ENCODE measurements at regions of chr11 and their contacts with region 1.

Region 1: GRCh38 chr11:58254936-58255335 is 13.1 kb downstream of the OR10W1 start:
- DNase-seq: no peak
- H3K4me3 ChIP-seq: no peak overlapping the region
- H3K27ac ChIP-seq: no peak overlapping the region
- H3K4me1 ChIP-seq: no peaks in the 10 kb centered on the region
- H3K27me3 ChIP-seq: no peaks in the 10 kb centered on the region
- CTCF ChIP-seq: no peak
- EP300 ChIP-seq: no peak
- POLR2A ChIP-seq: no peak

Region 2: GRCh38 chr11:57896361-57897145 is 358.4 kb before region 1 on chr11:
- intact Hi-C with region 1: no loop called
- DNase-seq: no peak
- H3K4me3 ChIP-seq: no peak overlapping the region
- H3K27ac ChIP-seq: no peak overlapping the region
- H3K4me1 ChIP-seq: no peaks in the 10 kb centered on the region
- H3K27me3 ChIP-seq: no peaks in the 10 kb centered on the region
- CTCF ChIP-seq: no peak
- EP300 ChIP-seq: no peak
- POLR2A ChIP-seq: no peak

Region 3: GRCh38 chr11:58179648-58180047 is 75.3 kb before region 1 on chr11:
- intact Hi-C with region 1: loop called in 1 of 4 experiments (anchors 2 kb)
- DNase-seq: peak in 1 of 5 donors; percentile 15
- H3K4me3 ChIP-seq: no peak overlapping the region
- H3K27ac ChIP-seq: no peak overlapping the region
- H3K4me1 ChIP-seq: no peaks in the 10 kb centered on the region
- H3K27me3 ChIP-seq: no peaks in the 10 kb centered on the region
- CTCF ChIP-seq: no peak
- EP300 ChIP-seq: no peak
- POLR2A ChIP-seq: no peak

Region 4: DNA sequence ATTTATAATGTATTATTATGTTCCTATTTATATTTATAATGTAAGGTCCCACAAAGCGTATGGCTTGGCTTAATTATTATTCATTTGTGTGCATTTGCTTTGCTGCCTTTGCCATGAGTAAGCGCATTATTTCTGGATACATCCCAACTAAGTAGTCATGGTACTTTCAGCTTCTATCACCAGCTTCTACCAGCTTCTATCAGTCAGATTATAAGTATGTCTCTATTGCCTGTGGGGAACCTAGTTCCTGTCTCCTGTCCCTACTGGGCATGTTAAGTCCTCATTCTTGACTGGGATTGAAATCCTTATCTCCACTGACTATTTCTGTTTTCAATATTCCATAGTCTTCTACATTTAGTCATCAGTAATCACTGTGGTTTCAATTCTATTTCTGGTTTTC is 46.6 kb after region 1 on chr11:
- intact Hi-C with region 1: no loop called
- DNase-seq: no peak
- H3K4me3 ChIP-seq: no peak overlapping the region
- H3K27ac ChIP-seq: no peak overlapping the region
- H3K4me1 ChIP-seq: no peaks in the 10 kb centered on the region
- H3K27me3 ChIP-seq: no peaks in the 10 kb centered on the region
- CTCF ChIP-seq: no peak
- EP300 ChIP-seq: no peak
- POLR2A ChIP-seq: no peak